A549 (cell line): ENCODE measurements at regions of chr1 and their contacts with region 1.

Region 1: GRCh38 chr1:46527474-46528296 is 23.8 kb downstream of the KNCN start:
- DNase-seq: peak; percentile 64 to 69
- ATAC-seq: peak; percentile 78 to 91
- H3K4me3 ChIP-seq: no peak overlapping the region
- H3K27ac ChIP-seq: peak overlapping the region in 1 of 2 experiments; percentile 68; a peak in 3 of 6 replicates
- H3K4me1 ChIP-seq: peaks cover 32% of the 10 kb centered on the region
- CTCF ChIP-seq: peak; percentile 85
- EP300 ChIP-seq: no peak
- POLR2A ChIP-seq: no peak
- RAD21 ChIP-seq: peak; percentile 97 to 98

Region 2: DNA sequence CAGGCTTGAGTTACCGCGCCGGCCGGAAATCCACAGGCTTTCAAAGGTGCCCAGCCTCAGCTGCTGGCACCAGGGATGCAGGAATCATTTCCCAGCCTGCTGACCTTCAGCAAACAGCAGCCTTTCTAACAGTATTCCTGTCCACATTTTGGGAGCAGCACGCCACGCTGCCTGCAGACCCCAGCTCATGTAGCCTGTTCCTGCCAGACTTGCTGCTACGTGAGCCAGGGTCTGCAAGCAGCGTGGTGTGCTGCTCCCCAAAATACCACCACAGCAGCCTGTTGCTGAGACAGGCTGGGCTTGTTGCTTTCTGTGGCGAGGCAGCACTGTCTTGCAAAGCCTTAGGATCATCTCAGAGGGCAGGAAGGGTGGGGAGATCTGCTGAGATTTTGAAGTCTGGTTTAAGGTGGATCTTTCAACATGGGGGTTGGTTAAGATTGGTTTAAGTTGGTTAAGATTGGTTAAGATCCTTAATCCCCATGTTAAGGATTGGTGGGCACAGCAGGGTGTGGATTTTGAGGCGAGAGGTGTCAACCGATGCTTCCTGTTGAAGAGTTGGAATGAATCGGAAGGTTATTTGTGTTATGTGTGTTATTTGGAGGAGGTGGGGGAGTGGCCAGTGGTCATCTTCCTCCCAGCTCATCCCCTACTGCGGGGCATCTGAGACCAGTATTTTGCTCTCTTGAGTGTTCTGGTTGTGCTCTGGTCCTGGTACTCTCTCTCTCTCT is 120.6 kb before region 1 on chr1:
- CTCF ChIA-PET with region 1: interaction called, 49 read pairs
- POLR2A ChIA-PET with region 1: no interaction called
- DNase-seq: no peak
- ATAC-seq: no peak
- H3K4me3 ChIP-seq: no peak overlapping the region
- H3K27ac ChIP-seq: no peak overlapping the region
- H3K4me1 ChIP-seq: peaks cover 2% of the 10 kb centered on the region
- CTCF ChIP-seq: no peak
- EP300 ChIP-seq: no peak
- POLR2A ChIP-seq: no peak
- RAD21 ChIP-seq: no peak

Region 3: DNA sequence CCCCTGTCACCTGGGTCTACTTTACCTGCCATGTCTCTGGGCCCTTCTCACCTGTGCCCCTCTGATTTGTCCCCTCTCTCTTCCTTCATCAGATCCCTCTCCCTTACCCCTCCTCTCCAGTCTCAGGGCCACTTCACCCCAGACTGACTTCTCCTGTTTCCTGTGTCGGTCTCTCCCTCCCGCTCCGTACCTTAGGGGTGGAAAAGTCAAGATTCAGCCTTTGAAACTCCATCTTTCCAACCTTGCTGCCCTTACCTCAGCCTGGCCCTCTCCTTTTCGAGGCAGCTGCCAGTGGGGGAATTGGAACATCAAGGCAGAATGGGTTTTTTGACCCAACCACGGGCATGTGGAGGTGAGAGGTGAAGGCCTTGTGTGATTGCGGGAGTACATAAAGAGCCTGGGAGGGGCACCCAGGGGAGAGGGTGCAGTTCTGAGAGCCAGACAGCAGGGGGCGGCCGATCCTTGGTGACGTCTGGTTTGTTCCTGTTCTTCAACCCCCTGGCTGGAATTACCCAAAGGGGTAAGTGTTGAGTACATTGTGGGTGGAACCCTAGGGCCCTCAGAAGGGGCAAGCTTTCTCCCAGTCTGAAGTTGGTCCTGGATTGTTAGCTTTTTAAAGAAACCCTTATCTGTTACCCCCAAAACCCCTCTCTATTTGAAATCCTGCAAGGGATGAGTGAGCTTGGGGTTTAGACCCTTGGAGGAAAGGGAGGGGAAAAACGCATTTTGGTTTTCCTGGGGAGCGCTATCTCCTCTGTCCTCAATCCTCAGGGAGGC is 50.3 kb before region 1 on chr1:
- CTCF ChIA-PET with region 1: interaction called, 235 read pairs
- POLR2A ChIA-PET with region 1: no interaction called
- DNase-seq: peak; percentile 61 to 88
- ATAC-seq: peak; percentile 78 to 92
- H3K4me3 ChIP-seq: no peak overlapping the region
- H3K27ac ChIP-seq: no peak overlapping the region
- H3K4me1 ChIP-seq: no peaks in the 10 kb centered on the region
- CTCF ChIP-seq: peak; percentile 77
- EP300 ChIP-seq: no peak
- POLR2A ChIP-seq: no peak
- RAD21 ChIP-seq: peak; percentile 90

Region 4: GRCh38 chr1:46501528-46501927 is 26.2 kb before region 1 on chr1:
- CTCF ChIA-PET with region 1: interaction called, 235 read pairs
- POLR2A ChIA-PET with region 1: no interaction called
- DNase-seq: no peak
- ATAC-seq: no peak
- H3K4me3 ChIP-seq: no peak overlapping the region
- H3K27ac ChIP-seq: no peak overlapping the region
- H3K4me1 ChIP-seq: 0 out of 3 replicates have a peak, but pooled peaks cover 2% of the 10 kb centered on the region
- CTCF ChIP-seq: no peak
- EP300 ChIP-seq: no peak
- POLR2A ChIP-seq: no peak
- RAD21 ChIP-seq: no peak

Region 5: DNA sequence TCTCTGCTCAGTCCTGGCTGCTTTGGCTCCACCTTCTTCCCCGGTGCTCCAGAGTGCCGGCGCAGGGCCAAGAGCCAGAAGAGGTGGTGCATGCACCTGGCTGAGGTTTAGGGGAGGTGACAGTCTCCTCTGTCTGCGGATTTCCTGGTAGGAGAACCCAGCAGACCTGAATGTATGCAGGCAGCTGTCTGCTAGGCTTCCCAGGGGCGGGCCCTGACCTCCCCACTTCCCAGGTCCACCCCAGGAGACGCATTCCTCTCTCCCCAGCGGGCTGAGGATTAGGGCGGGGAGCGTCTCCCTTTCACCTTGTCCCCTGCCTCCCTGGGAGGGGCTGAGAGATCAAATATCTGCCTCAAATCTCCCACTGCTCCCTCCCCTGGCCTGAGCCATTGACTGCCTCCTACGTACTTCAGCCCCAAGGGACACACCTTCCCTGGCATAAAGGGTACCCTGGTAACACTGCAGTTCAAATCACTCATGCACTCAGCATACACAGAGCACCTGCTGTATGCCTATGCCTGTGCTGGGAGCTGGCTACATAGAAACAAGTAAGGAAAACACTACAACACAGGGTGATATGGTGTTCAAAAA is 10.6 kb before region 1 on chr1:
- CTCF ChIA-PET with region 1: interaction called, 29 read pairs
- POLR2A ChIA-PET with region 1: no interaction called
- DNase-seq: peak in 1 of 2 experiments; percentile 34
- ATAC-seq: peak; percentile 4 to 37; a peak in 3 of 6 replicates
- H3K4me3 ChIP-seq: no peak overlapping the region
- H3K27ac ChIP-seq: peak overlapping the region; percentile 85 to 97; a peak in 5 of 6 replicates
- H3K4me1 ChIP-seq: peaks cover 58% of the 10 kb centered on the region
- CTCF ChIP-seq: no peak
- EP300 ChIP-seq: no peak
- POLR2A ChIP-seq: no peak
- RAD21 ChIP-seq: no peak

Region 6: GRCh38 chr1:46547481-46548383 is 20.0 kb after region 1 on chr1:
- CTCF ChIA-PET with region 1: interaction called, 110 read pairs
- POLR2A ChIA-PET with region 1: no interaction called
- DNase-seq: peak; percentile 34 to 56
- ATAC-seq: peak; percentile 61 to 86; a peak in 5 of 6 replicates
- H3K4me3 ChIP-seq: no peak overlapping the region
- H3K27ac ChIP-seq: no peak overlapping the region
- H3K4me1 ChIP-seq: no peaks in the 10 kb centered on the region
- CTCF ChIP-seq: peak; percentile 54
- EP300 ChIP-seq: no peak
- POLR2A ChIP-seq: no peak
- RAD21 ChIP-seq: peak; percentile 45 to 49

Region 7: GRCh38 chr1:46622344-46622743 is 94.7 kb after region 1 on chr1:
- CTCF ChIA-PET with region 1: no interaction called
- POLR2A ChIA-PET with region 1: no interaction called
- DNase-seq: peak; percentile 43 to 44
- ATAC-seq: peak; percentile 74 to 88; a peak in 5 of 6 replicates
- H3K4me3 ChIP-seq: no peak overlapping the region
- H3K27ac ChIP-seq: no peak overlapping the region
- H3K4me1 ChIP-seq: no peaks in the 10 kb centered on the region
- CTCF ChIP-seq: peak; percentile 47
- EP300 ChIP-seq: no peak
- POLR2A ChIP-seq: no peak
- RAD21 ChIP-seq: peak; percentile 51 to 64